ENCODE measurements at regions of chr5 and their contacts with region 1.

Region 1: DNA sequence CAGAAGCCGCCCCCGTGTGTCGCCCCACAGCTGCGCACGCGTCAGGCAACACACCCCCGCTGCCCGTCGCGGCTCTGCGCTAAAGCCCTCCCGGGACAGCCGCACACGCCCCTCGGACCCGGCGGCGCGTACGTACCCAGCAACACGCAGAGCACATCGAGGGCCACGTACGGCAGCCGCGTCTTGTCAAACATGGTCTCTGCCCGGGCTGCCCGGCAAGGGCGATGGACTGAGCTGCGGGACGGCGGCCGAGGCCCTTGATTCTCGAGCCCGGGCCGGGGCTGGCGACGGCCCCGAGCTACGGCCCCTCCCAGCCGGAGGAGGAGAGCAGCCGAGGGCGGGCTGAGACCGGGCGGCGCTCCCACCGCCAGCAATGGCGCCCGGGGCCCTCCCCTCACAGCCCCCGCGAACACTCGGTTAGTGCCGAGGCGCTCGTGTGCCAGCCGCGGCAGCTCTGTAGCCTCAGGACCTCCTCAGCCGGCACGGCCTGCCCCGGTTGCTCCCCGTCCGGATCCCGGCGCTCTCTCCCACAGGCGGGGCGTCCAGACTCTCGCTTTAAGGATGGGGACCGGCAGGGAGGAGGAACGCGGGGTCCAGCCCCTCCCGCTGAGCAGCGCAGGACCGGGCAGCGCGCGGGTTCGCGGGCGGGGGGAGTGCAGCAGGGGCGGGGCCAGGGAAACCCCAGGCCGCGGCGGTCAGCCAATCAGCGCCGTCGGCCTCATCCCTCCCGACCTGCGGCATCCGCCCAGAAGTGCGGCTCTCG is at the start of gene PLPP1:
- DNase-seq: peak; percentile 80 to 92
- ATAC-seq: peak; percentile 81 to 91 (median 84)
- H3K4me3 ChIP-seq: peak within 1 kb of the TSS; percentile 81
- H3K4me3 Mint-ChIP-seq: peak within 1 kb of the TSS; percentile 78
- H3K27ac ChIP-seq: peak within 1 kb of the TSS; percentile 86
- H3K27ac Mint-ChIP-seq: peak within 1 kb of the TSS; percentile 61 to 90
- H3K4me1 ChIP-seq: peaks cover 12% of the 10 kb centered on the region
- H3K4me1 Mint-ChIP-seq: peaks cover 8 to 17% of the 10 kb centered on the region in 2 donors
- H3K27me3 ChIP-seq: no peaks in the 10 kb centered on the region
- H3K27me3 Mint-ChIP-seq: peaks cover 0 to 4% of the 10 kb centered on the region in 2 donors
- CTCF ChIP-seq: no peak
- total RNA-seq, gene PLPP1: 3.3 to 5.5 (median 4.2) TPM

Region 2: GRCh38 chr5:54310433-54311175 is 1224.0 kb before region 1 on chr5 and contains the start of gene ARL15:
- intact Hi-C with region 1: loop called (anchors 10 kb)
- DNase-seq: peak; percentile 96 to 98
- ATAC-seq: peak; percentile 93 to 98 (median 94)
- H3K4me3 ChIP-seq: peak within 1 kb of the TSS; percentile 79
- H3K4me3 Mint-ChIP-seq: peak within 1 kb of the TSS; percentile 98
- H3K27ac ChIP-seq: peak within 1 kb of the TSS; percentile 67
- H3K27ac Mint-ChIP-seq: peak within 1 kb of the TSS; percentile 90 to 98
- H3K4me1 ChIP-seq: peaks cover 14% of the 10 kb centered on the region
- H3K4me1 Mint-ChIP-seq: peaks cover 44 to 46% of the 10 kb centered on the region in 2 donors
- H3K27me3 ChIP-seq: no peaks in the 10 kb centered on the region
- H3K27me3 Mint-ChIP-seq: peaks cover 0 to 7% of the 10 kb centered on the region in 2 donors
- CTCF ChIP-seq: no peak
- total RNA-seq, gene ARL15: 28.9 to 35.1 (median 33.1) TPM

Region 3: GRCh38 chr5:54703133-54703532 is 831.5 kb before region 1 on chr5:
- intact Hi-C with region 1: loop called (anchors 10 kb)
- DNase-seq: no peak
- ATAC-seq: no peak
- H3K4me3 ChIP-seq: no peak overlapping the region
- H3K4me3 Mint-ChIP-seq: no peak overlapping the region
- H3K27ac ChIP-seq: no peak overlapping the region
- H3K27ac Mint-ChIP-seq: no peak overlapping the region
- H3K4me1 ChIP-seq: peaks cover 3% of the 10 kb centered on the region
- H3K4me1 Mint-ChIP-seq: peaks cover 20 to 28% of the 10 kb centered on the region in 2 donors
- H3K27me3 ChIP-seq: no peaks in the 10 kb centered on the region
- H3K27me3 Mint-ChIP-seq: peaks cover 0 to 4% of the 10 kb centered on the region in 2 donors
- CTCF ChIP-seq: no peak

Region 4: DNA sequence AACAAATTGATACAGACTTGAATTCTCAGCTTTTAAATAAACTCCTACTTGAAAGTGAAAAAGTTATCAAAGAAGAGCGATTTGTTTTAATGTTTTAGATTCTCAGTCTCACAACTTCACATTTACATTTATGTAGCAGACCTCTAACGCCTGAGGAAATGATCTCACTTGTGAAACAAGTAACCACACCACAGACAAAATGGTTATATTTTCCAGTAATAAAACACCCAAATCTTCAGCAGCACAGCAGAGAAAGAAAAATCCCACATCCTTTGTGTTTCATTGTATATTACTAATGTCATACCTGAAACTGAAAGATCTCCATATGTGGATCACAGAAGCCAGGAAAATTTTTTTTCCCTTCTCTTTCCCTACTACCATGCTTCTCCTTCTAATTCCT is 462.0 kb before region 1 on chr5:
- intact Hi-C with region 1: no loop called
- DNase-seq: peak in 1 of 2 donors; percentile 65
- ATAC-seq: peak; percentile 81 to 92 (median 90)
- H3K4me3 ChIP-seq: no peak overlapping the region
- H3K4me3 Mint-ChIP-seq: peak overlapping the region; percentile 83
- H3K27ac ChIP-seq: peak overlapping the region; percentile 72
- H3K27ac Mint-ChIP-seq: peak overlapping the region; percentile 79 to 98
- H3K4me1 ChIP-seq: peaks cover 31% of the 10 kb centered on the region
- H3K4me1 Mint-ChIP-seq: peaks cover 47 to 48% of the 10 kb centered on the region in 2 donors
- H3K27me3 ChIP-seq: no peaks in the 10 kb centered on the region
- H3K27me3 Mint-ChIP-seq: no peaks in the 10 kb centered on the region
- CTCF ChIP-seq: no peak

Region 5: DNA sequence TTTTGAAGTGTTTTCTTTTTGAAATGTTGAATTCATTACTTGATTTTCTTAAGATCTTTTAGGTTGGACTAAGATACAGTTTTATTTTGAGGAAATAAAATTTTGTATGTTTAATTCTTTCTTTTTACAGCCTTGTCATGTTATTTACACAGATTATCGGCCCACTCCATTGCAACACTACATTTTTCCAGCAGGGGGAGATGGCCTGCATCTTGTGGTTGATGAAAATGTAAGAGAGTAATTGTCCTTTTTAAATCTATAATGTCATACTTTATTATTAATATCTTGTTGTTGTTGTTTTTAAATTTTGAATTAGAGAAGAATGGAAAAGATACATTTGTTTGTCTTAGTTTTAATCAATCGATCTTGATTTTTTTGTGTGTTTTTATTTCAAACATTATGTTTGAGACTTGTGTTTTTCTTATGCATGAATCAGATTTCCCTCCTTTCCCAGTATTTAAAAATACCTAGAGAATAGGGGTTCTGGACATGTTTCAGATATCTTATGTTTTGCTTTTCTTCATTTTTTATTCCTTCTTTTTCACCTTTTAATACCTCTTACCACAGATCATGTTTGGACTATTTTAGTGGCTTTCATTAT is 190.1 kb before region 1 on chr5:
- intact Hi-C with region 1: no loop called
- DNase-seq: peak; percentile 36 to 79
- ATAC-seq: peak; percentile 57 to 68 (median 67)
- H3K4me3 ChIP-seq: no peak overlapping the region
- H3K4me3 Mint-ChIP-seq: no peak overlapping the region
- H3K27ac ChIP-seq: no peak overlapping the region
- H3K27ac Mint-ChIP-seq: peak overlapping the region in 1 of 2 donors; percentile 45
- H3K4me1 ChIP-seq: no peaks in the 10 kb centered on the region
- H3K4me1 Mint-ChIP-seq: peaks cover 0 to 5% of the 10 kb centered on the region in 2 donors
- H3K27me3 ChIP-seq: no peaks in the 10 kb centered on the region
- H3K27me3 Mint-ChIP-seq: no peaks in the 10 kb centered on the region
- CTCF ChIP-seq: peak; percentile 98

Region 6: GRCh38 chr5:55994574-55995333 is 460.1 kb after region 1 on chr5 and contains the start of gene IL6ST:
- intact Hi-C with region 1: loop called (anchors 10 kb)
- DNase-seq: peak; percentile 95 to 98
- ATAC-seq: peak; percentile 95 to 100 (median 98)
- H3K4me3 ChIP-seq: peak within 1 kb of the TSS; percentile 94
- H3K4me3 Mint-ChIP-seq: peak within 1 kb of the TSS; percentile 99
- H3K27ac ChIP-seq: peak within 1 kb of the TSS; percentile 77
- H3K27ac Mint-ChIP-seq: peak within 1 kb of the TSS; percentile 92 to 96
- H3K4me1 ChIP-seq: peaks cover 5% of the 10 kb centered on the region
- H3K4me1 Mint-ChIP-seq: peaks cover 29 to 45% of the 10 kb centered on the region in 2 donors
- H3K27me3 ChIP-seq: no peaks in the 10 kb centered on the region
- H3K27me3 Mint-ChIP-seq: no peaks in the 10 kb centered on the region
- CTCF ChIP-seq: no peak
- total RNA-seq, gene IL6ST: 48.5 to 73.0 (median 53.8) TPM